Psoas muscle (tissue), 8 donors: ENCODE measurements at regions of chr1 and their contacts with region 1.

Region 1: GRCh38 chr1:155227261-155228095 is 19.0 kb downstream of the MTX1 start:
- DNase-seq: peak; percentile 98
- ATAC-seq: peak; percentile 98 to 99 (median 98)
- H3K4me3 ChIP-seq: peak overlapping the region; percentile 79
- H3K27ac ChIP-seq: peak overlapping the region; percentile 84
- H3K4me1 ChIP-seq: no peaks in the 10 kb centered on the region
- H3K27me3 ChIP-seq: no peaks in the 10 kb centered on the region
- CTCF ChIP-seq: no peak

Region 2: DNA sequence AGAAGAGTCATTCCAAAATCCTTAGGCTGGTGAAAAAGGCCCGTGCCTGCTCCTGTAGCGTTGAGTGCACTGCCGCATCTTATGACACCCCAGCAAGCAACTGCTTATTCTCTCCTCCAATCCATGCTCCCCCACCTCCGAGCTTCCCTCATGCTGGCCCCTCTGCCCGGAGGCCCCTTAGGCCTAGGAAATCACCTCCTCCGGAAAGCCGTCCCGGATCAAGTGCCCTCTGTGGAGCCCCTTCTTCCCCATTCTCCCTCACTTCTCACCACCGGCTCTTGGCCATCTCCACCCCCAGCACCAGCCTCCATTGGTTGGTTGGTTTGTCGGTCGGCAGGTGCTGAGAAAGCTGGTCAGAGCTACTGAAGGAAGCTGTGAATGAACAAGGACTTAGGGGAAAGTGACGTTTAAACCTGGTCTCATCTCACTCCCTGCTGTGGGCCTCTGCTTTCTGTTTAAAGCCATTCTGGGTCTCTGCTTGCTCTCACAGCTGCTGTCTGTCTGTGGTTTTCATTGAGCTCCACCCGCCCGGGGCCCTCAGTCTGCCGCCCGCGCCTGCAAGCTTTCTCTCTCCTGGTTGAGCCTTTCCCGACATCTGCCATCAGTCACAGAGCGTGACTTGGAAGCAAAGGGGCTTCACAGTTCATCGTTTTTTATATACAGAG is 479.6 kb before region 1 on chr1:
- intact Hi-C with region 1: no loop called
- DNase-seq: no peak
- ATAC-seq: no peak
- H3K4me3 ChIP-seq: no peak overlapping the region
- H3K27ac ChIP-seq: no peak overlapping the region
- H3K4me1 ChIP-seq: peaks cover 20% of the 10 kb centered on the region
- H3K27me3 ChIP-seq: no peaks in the 10 kb centered on the region
- CTCF ChIP-seq: no peak

Region 3: GRCh38 chr1:155176544-155177071 is 50.9 kb before region 1 on chr1:
- intact Hi-C with region 1: loop called (anchors 5 kb)
- DNase-seq: peak; percentile 81 to 90
- ATAC-seq: peak; percentile 58 to 73 (median 67)
- H3K4me3 ChIP-seq: no peak overlapping the region
- H3K27ac ChIP-seq: no peak overlapping the region
- H3K4me1 ChIP-seq: peaks cover 6% of the 10 kb centered on the region
- H3K27me3 ChIP-seq: peaks cover 0 to 13% (median 10%) of the 10 kb centered on the region in 3 donors
- CTCF ChIP-seq: peak; percentile 91

Region 4: DNA sequence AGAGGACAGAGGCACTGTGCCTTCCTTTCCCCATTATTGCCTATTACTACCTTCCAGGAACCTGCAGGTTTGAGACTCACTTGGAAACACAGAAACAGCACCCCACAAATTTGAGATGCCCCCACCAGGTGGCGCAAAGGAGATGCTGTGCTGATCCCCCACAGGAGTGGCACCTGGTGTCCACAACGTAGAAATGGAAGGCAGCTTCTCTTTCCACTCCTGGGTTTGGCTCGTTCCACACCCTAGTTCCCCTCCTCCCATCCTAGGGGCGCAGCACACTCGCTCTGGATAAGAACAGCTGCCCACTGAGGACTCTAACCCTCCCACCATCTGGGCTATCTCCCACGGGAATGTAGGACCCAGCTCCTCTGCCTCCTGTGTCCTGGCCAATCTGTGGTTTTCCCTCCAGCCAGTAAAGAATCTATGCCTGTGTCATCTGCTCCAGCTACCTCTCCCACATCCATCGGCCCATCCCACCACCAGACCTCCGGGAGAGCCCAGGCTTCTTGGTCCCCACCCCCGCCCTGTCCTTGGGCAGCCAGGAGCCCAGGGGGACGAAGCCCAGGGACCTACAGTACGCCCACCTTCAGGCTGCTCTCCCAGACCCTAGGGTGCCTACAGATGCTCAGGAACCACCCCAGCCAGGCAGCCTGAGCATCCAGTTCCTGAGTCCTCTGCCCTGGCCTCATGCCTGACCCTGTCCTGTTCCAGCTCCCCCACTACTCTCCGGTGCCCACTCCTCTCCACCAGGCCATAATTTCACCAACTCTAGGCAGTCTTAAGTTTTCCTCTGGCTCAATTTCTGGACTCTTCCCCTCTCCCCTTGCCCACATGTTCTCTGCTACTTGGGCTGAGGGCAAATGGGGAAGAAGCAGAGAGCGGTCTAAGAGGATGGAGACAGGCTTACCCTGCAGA is 20.3 kb before region 1 on chr1:
- intact Hi-C with region 1: loop called in 1 of 2 experiments (anchors 1 kb)
- DNase-seq: peak; percentile 86 to 90
- ATAC-seq: peak; percentile 49 to 59 (median 51)
- H3K4me3 ChIP-seq: peak overlapping the region; percentile 100
- H3K27ac ChIP-seq: peak overlapping the region; percentile 99
- H3K4me1 ChIP-seq: peaks cover 21% of the 10 kb centered on the region
- H3K27me3 ChIP-seq: no peaks in the 10 kb centered on the region
- CTCF ChIP-seq: peak; percentile 82

Region 5: GRCh38 chr1:156368889-156369684 is 1141.6 kb after region 1 on chr1 and contains the start of gene RHBG:
- intact Hi-C with region 1: no loop called
- DNase-seq: peak in 1 of 2 donors; percentile 27
- ATAC-seq: peak in 3 of 4 donors; percentile 16 to 37 (median 35)
- H3K4me3 ChIP-seq: peak within 1 kb of the TSS; percentile 62
- H3K27ac ChIP-seq: no peak within 1 kb of the TSS
- H3K4me1 ChIP-seq: no peaks in the 10 kb centered on the region
- H3K27me3 ChIP-seq: peaks cover 0 to 46% (median 3%) of the 10 kb centered on the region in 3 donors
- CTCF ChIP-seq: no peak
- total RNA-seq, gene RHBG: not detected